Vagina (tissue), 2 donors: ENCODE measurements at regions of chr11 and their contacts with region 1.

Region 1: GRCh38 chr11:85664615-85665481 is at the start of gene CREBZF:
- DNase-seq: peak in 1 of 2 donors; percentile 96
- H3K4me3 ChIP-seq: peak within 1 kb of the TSS; percentile 89 to 92
- H3K27ac ChIP-seq: peak within 1 kb of the TSS; percentile 97
- H3K4me1 ChIP-seq: peaks cover 40% of the 10 kb centered on the region
- H3K27me3 ChIP-seq: no peaks in the 10 kb centered on the region
- CTCF ChIP-seq: no peak
- POLR2A ChIP-seq: peak; percentile 55 to 97
- total RNA-seq, gene CREBZF: 60.9 TPM

Region 2: DNA sequence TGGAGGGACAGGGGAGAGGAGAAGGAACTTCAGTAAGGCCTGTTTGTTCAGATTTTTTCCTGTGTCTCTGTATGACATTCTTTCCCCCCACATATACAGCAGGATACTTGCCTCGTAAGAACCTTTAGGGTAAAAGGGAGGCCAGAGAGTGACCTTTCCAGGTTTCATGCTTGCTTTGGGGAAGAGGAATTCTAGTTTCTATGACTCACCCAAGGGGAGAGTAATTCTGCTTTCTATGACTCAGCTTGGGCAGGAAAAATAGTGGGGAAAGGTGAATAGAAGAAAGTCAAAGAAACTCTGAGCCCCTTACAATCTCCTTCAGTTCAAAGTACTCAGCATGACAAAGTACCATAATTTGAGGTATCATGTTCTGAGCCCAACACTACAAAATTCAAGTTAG is 494.6 kb before region 1 on chr11:
- intact Hi-C with region 1: no loop called
- DNase-seq: no peak
- H3K4me3 ChIP-seq: no peak overlapping the region
- H3K27ac ChIP-seq: no peak overlapping the region
- H3K4me1 ChIP-seq: no peaks in the 10 kb centered on the region
- H3K27me3 ChIP-seq: no peaks in the 10 kb centered on the region
- CTCF ChIP-seq: no peak
- POLR2A ChIP-seq: no peak

Region 3: DNA sequence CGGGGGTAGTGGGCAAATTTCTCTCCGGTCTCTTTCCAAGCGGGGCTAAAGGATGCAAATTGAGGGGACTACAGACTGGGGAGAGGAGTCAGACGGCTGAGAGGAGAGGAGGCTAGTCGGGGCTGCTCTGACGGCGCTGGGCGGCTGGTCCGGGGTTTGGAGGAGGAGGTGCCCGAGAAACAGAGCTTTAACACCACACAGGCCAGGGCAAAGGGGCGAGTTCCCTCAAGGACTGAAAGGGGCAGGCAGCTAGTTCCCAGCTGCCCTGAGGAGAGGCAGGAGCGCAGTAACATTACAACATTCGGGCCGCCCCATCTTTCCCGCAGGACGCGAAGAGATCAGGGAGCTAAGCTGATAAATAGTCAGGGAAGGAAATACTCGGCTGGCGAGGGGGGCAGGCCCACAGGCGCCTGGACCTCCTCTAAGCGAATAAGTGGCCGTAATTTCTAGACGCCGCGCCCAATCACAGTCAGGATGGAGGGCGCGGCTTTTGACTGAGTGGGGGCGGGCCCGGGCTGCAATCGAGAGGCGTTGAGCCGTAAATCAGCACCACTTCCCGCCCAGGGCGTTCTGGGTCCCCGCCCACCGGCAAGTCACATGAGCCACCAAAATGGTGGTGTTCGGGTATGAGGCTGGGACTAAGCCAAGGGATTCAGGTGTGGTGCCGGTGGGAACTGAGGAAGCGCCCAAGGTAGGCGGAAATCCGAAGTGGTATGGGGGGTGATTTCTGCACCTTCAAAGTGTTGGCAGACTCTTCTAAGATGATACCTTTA is 36.7 kb before region 1 on chr11 and contains the start of gene TMEM126B:
- intact Hi-C with region 1: loop called (anchors 2 kb)
- DNase-seq: peak; percentile 97 to 99
- H3K4me3 ChIP-seq: peak within 1 kb of the TSS; percentile 65 to 77
- H3K27ac ChIP-seq: peak within 1 kb of the TSS; percentile 94
- H3K4me1 ChIP-seq: peaks cover 15% of the 10 kb centered on the region
- H3K27me3 ChIP-seq: no peaks in the 10 kb centered on the region
- CTCF ChIP-seq: no peak
- POLR2A ChIP-seq: peak in 1 of 2 donors; percentile 92
- total RNA-seq, gene TMEM126B: 34.1 TPM